ENCODE measurements at regions of chr3 and their contacts with region 1.

Region 1: DNA sequence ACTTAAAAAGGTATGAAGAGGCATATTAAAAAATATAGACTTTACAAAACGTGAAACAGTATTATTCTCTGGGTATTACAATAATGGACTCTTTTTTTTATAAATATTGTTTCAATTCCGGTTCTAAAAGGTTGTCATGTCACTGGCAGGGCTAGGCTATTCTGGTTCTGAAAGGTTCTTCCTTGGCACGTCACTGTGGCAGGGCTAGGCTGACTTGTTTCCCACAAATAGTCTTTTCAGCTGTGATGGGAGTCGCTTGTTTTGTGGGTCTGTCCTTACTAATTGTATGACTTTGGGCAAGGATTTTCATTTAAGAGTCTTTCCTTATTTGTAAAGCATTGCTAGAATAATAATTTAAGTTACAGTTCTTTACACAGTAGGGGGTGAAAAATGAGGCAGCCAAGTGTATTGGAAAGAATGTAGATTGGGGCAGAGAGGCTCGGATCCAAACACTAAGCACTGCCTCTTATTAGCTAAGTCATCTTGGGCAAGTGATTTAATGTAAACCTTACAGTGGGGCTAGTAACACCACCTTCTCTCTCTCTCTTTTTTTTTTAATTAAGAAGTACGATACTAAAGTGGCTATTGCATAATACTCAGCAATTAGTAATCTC is 12.4 kb upstream of the MELTF start:
- DNase-seq: no peak
- H3K4me3 ChIP-seq: no peak overlapping the region
- H3K4me3 Mint-ChIP-seq: no peak overlapping the region
- H3K27ac ChIP-seq: no peak overlapping the region
- H3K27ac Mint-ChIP-seq: no peak overlapping the region
- H3K4me1 ChIP-seq: no peaks in the 10 kb centered on the region
- H3K4me1 Mint-ChIP-seq: no peaks in the 10 kb centered on the region
- H3K27me3 ChIP-seq: peaks cover 2% of the 10 kb centered on the region in 2 donors
- H3K27me3 Mint-ChIP-seq: peaks cover 0 to 4% (median 3%) of the 10 kb centered on the region in 3 donors
- CTCF ChIP-seq: no peak

Region 2: GRCh38 chr3:196995646-196996371 is 46.2 kb before region 1 on chr3:
- intact Hi-C with region 1: loop called in 1 of 2 experiments (anchors 10 kb)
- DNase-seq: no peak
- H3K4me3 ChIP-seq: no peak overlapping the region
- H3K4me3 Mint-ChIP-seq: no peak overlapping the region
- H3K27ac ChIP-seq: no peak overlapping the region
- H3K27ac Mint-ChIP-seq: no peak overlapping the region
- H3K4me1 ChIP-seq: no peaks in the 10 kb centered on the region
- H3K4me1 Mint-ChIP-seq: peaks cover 2% of the 10 kb centered on the region
- H3K27me3 ChIP-seq: no peaks in the 10 kb centered on the region
- H3K27me3 Mint-ChIP-seq: peaks cover under 1 to 1% (median 1%) of the 10 kb centered on the region in 3 donors
- CTCF ChIP-seq: no peak

Measured in CD14-positive monocyte (primary cell).